ENCODE measurements at regions of chr2 and their contacts with region 1.

Region 1: GRCh38 chr2:238263204-238264071 is 23.6 kb upstream of the HES6 start:
- DNase-seq: peak; percentile 53
- ATAC-seq: peak; percentile 57
- H3K4me3 Mint-ChIP-seq: no peak overlapping the region
- H3K27ac Mint-ChIP-seq: no peak overlapping the region
- H3K4me1 Mint-ChIP-seq: peaks cover 3% of the 10 kb centered on the region
- H3K27me3 Mint-ChIP-seq: no peaks in the 10 kb centered on the region
- CTCF ChIP-seq: peak; percentile 54

Region 2: GRCh38 chr2:238015705-238016104 is 247.7 kb before region 1 on chr2:
- CTCF ChIA-PET with region 1: no interaction called
- POLR2A ChIA-PET with region 1: no interaction called
- intact Hi-C with region 1: loop called (anchors 1 kb)
- DNase-seq: no peak
- ATAC-seq: no peak
- H3K4me3 Mint-ChIP-seq: no peak overlapping the region
- H3K27ac Mint-ChIP-seq: no peak overlapping the region
- H3K4me1 Mint-ChIP-seq: peaks cover 7% of the 10 kb centered on the region
- H3K27me3 Mint-ChIP-seq: no peaks in the 10 kb centered on the region
- CTCF ChIP-seq: no peak

Region 3: DNA sequence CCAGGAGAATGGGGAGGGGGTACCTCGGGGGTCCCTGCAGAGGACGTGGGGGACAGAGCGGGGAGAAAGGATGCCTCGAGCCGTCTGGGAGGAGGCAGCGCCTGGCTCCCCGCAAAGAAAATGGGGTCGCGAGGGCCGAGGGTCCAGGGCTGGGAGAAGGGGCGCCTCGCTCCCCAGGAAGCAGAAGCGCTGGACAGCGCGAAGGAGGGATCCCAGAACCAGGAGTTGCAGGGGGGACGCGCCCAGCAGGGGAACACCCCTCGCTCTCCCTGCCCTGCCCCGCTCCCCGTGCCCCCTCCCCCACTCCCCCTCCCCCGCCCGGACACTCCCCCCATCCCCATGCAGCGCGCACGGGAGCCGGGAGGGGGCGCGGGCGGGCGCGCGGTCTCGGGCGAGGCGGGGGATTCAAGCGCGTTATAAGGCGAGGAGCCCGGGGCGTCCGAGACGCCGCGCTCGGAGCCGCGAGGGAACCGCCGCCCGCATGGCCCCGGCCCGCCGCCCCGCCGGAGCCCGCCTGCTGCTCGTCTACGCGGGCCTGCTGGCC is 104.8 kb before region 1 on chr2 and contains the start of gene ERFE:
- CTCF ChIA-PET with region 1: interaction called, 5 read pairs
- POLR2A ChIA-PET with region 1: interaction called, 3 read pairs
- intact Hi-C with region 1: loop called (anchors 1 kb)
- DNase-seq: peak; percentile 58
- ATAC-seq: peak; percentile 90
- H3K4me3 Mint-ChIP-seq: peak within 1 kb of the TSS; percentile 70
- H3K27ac Mint-ChIP-seq: no peak within 1 kb of the TSS
- H3K4me1 Mint-ChIP-seq: peaks cover 12% of the 10 kb centered on the region
- H3K27me3 Mint-ChIP-seq: peaks cover 11% of the 10 kb centered on the region
- CTCF ChIP-seq: no peak
- total RNA-seq, gene ERFE: not detected in 2 replicates